Mucosa of descending colon (tissue), 3 donors: ENCODE measurements at regions of chr3 and their contacts with region 1.

Region 1: DNA sequence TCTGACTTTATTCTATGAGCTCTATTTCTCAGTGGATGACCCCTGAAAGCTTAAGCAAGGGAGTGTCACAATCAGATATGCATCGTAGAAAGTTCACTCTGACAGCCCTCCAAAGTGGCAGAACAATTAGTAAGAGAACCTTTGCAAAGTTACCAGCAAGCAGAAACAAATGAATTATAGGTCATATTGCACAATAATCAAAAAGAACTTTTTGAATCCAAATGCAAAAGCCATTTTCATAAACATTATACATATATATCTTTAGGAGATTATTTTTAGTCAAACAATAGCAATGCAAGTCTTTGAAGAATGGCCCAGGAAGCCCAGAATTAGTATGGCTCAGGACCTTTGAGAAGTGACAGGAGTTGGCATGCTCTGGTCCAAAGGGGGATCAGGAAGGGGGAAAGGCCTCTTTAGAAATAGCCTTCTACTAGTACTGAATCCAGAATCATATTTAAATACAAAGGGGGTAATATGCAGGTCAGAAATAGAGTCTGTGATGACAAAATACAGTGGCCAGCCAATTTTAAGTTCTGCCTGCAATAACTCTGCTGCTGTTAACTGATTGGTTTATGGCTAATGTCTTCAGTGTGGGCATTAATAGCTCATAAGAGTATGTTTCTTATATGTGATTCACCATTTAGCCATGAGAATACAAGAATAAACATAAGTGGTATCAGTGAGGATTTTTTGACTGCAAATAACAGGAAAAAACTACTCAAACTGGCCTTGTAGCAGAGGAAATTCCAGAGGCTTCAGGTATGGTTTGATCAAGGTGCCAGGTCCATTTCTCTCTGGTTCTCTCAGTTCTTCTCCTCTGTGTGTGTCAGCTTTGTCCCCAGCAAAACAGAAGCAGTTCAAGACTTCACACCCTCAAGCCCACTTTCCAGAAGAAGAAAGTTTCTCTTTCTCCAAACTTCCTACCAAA is 17.0 kb upstream of the ITGB5 start:
- DNase-seq: no peak
- ATAC-seq: peak; percentile 5
- H3K4me3 ChIP-seq: no peak overlapping the region
- H3K4me1 ChIP-seq: no peaks in the 10 kb centered on the region
- CTCF ChIP-seq: no peak

Region 2: DNA sequence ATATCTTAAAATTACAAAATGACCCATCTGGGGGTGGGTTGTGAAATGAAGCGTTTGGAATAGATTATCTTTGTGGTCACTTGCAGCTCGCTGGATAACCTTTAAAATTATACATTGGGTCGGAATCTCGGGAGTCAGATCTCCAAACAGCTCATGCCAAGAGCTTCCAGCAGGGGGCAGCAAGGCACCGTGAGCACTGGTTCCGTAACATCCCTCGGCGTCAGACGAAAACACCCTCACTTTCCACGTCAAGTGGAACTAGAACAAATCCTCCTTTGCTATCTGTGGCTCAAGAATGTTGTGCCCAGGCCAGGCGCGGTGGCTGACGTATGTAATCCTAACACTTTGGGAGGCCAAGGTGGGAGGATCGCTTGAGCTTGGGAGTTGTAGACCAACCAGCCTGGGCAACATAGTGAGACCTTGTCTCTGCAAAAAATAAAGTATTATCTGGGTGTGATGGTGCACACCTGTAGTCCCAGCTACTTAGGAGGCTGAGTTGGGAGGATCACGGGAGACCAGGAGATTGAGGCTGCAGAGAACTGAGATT is 142.8 kb before region 1 on chr3:
- intact Hi-C with region 1: loop called (anchors 5 kb)
- DNase-seq: peak; percentile 72 to 95 (median 86)
- ATAC-seq: peak; percentile 93
- H3K4me3 ChIP-seq: no peak overlapping the region
- H3K4me1 ChIP-seq: peaks cover 6% of the 10 kb centered on the region
- CTCF ChIP-seq: peak; percentile 85

Region 3: DNA sequence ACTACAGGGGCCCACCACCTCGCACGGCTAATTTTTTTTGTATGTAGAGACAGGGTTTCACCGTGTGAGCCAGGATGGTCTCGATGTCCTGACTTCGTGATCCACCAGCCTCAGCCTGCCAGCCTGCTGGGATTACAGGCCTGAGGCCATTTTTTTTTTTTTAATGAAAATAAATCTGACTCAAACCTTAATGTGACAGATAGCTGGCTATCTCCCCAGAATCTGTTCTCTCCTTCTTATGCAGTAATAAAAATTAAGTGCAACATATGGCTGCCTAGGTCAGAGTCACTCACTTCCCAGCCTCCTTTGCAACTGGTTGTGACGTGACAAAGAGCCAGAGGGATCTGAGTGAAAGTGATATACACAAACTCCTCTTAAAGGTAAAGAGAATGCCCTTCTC is 418.0 kb after region 1 on chr3:
- intact Hi-C with region 1: no loop called
- DNase-seq: no peak
- ATAC-seq: no peak
- H3K4me3 ChIP-seq: no peak overlapping the region
- H3K4me1 ChIP-seq: no peaks in the 10 kb centered on the region
- CTCF ChIP-seq: no peak